HEK293 (cell line): ENCODE measurements at regions of chr22 and their contacts with region 1.

Region 1: DNA sequence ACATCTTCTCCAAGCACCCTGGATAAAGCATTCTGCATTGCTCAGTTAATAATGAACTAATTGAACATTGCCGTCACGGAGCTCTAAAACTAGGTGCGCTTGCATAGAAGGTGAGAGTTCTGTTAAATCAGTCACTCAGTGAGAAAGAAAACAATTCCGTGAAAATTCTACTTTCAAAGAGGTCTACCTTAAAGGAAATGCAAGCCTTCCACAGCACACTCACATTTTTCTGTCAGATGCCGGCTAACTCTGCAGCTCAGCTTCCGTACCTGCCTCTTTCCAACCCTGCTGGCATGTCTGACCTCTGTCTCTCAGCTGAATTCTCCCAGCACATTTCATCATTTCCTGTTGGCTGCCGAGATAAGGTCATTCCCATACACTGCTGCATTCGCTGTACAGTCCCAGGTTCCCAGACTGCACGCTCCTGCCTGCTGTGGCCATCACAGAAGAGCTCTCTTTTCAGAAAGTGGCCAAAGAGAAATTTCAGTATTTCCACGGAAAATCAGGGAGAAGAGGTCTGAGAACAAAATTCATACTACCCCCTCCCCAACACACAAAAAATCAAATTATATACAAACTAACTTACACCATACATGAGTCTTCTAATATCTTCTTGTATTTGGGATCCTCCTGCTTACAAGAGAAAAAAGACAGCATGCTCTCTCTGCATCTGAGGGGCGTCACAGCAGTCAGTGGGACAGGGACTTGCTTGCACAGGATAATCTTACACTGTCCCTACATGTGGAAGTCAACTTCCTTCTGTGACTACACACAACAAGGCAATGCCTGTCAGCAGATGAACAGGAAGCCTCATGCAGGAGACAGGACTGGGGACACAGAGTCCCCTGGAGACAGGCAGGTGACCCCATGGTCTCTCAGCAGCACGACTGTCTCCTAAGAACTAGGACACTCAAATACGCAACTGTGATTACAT is 55.1 kb downstream of the PACSIN2 start:
- H3K4me3 ChIP-seq: no peak overlapping the region
- H3K27ac ChIP-seq: peak overlapping the region; percentile 35; the same call in 1 of the 2 replicates
- H3K4me1 ChIP-seq: peaks cover 41% of the 10 kb centered on the region
- CTCF ChIP-seq: no peak

Region 2: GRCh38 chr22:42947211-42947990 is 12.4 kb before region 1 on chr22:
- CTCF ChIA-PET with region 1: interaction called, 9 read pairs
- POLR2A ChIA-PET with region 1: interaction called, 10 read pairs
- H3K4me3 ChIP-seq: no peak overlapping the region
- H3K27ac ChIP-seq: peak overlapping the region; percentile 19; the same call in 1 of the 2 replicates
- H3K4me1 ChIP-seq: peaks cover 35% of the 10 kb centered on the region
- CTCF ChIP-seq: no peak